ENCODE measurements at regions of chr6 and their contacts with region 1.

Region 1: GRCh38 chr6:11218538-11219399 is 13.7 kb downstream of the NEDD9 start:
- DNase-seq: no peak
- ATAC-seq: no peak
- H3K4me3 Mint-ChIP-seq: no peak overlapping the region
- H3K27ac Mint-ChIP-seq: no peak overlapping the region
- H3K4me1 Mint-ChIP-seq: peaks cover 31% of the 10 kb centered on the region
- H3K27me3 Mint-ChIP-seq: no peaks in the 10 kb centered on the region
- CTCF ChIP-seq: no peak

Region 2: DNA sequence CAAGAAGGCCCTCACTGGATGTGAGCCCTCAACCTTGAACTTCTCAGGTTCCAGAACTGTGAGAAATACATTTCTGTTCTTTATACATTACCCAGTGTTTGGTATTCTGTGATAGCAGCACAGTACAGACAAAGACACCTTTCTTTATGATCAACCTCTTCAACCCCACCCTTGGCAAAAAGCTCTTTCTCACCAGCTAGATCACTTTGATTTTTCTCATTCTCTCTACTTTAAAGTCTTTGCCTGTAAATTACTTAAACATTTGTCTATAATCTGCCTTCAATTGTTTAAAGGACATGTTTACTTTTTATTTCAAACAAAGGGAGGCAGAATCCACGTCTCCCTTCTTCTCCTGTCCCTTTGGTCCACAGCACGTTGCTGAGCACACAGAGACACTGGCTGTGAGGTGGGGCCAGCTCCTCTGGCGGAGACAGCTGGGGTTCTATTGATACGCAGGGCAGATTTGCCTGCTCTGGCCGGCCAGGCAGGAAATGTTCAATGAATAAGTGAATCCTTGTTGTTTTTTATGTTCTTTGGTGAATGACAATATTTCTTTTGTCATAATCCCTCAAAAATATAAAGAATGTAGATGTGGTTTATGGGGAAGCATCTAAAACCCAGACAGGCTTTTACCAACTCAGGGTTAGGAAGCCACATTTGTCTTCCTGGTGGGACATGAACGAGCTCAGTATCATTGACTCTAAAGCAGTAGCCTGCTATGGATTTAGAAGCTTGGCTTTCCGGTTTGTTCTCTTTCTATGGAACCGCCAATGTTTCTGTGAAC is 39.2 kb before region 1 on chr6:
- CTCF ChIA-PET with region 1: no interaction called
- POLR2A ChIA-PET with region 1: no interaction called
- intact Hi-C with region 1: loop called (anchors 5 kb)
- DNase-seq: no peak
- ATAC-seq: no peak
- H3K4me3 Mint-ChIP-seq: no peak overlapping the region
- H3K27ac Mint-ChIP-seq: no peak overlapping the region
- H3K4me1 Mint-ChIP-seq: no peaks in the 10 kb centered on the region
- H3K27me3 Mint-ChIP-seq: no peaks in the 10 kb centered on the region
- CTCF ChIP-seq: no peak

Measured in activated B cell treated with CpG ODN at 0.5 μM for 24 hours (primary cell).